Lower leg skin (tissue), 4 donors: ENCODE measurements at regions of chr5 and their contacts with region 1.

Region 1: DNA sequence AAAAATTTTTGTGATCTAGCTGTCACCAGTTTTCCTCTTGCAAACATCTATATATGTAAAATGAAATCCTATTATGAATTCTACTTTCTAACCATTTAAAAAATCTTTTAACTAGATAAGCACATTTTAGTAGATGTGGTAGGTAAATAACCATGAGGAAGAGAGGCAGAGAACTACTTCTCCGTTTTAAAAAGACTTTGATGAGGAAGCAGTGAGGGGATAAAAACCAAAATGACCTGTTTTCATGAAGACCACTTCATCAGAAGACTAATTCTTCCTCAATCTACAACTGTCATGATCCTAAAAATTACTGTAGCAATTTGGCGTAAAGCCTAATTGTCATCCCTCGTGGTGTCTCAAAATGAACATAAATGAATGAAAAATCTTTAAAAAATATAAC is 15.7 kb upstream of the ERBIN start:
- DNase-seq: no peak
- H3K4me3 ChIP-seq: no peak overlapping the region
- CTCF ChIP-seq: no peak
- POLR2A ChIP-seq: no peak

Region 2: GRCh38 chr5:65952259-65952658 is 41.5 kb after region 1 on chr5:
- intact Hi-C with region 1: loop called (anchors 1 kb)
- DNase-seq: no peak
- H3K4me3 ChIP-seq: no peak overlapping the region
- CTCF ChIP-seq: no peak
- POLR2A ChIP-seq: no peak